ENCODE measurements at regions of chr1 and their contacts with region 1.

Region 1: DNA sequence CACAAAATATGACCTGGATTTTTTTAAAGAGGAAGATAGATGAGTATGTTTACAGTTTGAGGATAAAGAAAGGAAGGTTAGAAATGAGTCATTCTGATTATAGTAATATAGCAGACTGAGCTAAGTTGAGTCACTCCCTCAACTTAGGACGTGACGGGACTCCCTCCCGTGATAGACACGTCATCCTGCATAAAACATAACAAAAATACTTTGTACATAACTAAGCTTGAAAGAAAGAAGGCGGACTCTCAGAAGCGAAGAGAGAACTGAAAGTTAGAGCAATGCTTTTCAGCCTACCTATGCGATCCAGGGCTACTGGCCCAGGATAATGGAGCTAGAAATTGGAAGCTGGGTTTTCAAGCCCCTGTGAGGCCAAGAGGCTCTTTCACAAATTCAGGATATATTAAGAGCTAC is 53.0 kb upstream of the DESI2 start:
- DNase-seq: peak; percentile 74
- ATAC-seq: peak; percentile 96
- H3K4me3 Mint-ChIP-seq: peak overlapping the region; percentile 55
- H3K27ac Mint-ChIP-seq: peak overlapping the region; percentile 95
- H3K4me1 Mint-ChIP-seq: peaks cover 20% of the 10 kb centered on the region
- H3K27me3 Mint-ChIP-seq: peaks cover 4% of the 10 kb centered on the region

Region 2: DNA sequence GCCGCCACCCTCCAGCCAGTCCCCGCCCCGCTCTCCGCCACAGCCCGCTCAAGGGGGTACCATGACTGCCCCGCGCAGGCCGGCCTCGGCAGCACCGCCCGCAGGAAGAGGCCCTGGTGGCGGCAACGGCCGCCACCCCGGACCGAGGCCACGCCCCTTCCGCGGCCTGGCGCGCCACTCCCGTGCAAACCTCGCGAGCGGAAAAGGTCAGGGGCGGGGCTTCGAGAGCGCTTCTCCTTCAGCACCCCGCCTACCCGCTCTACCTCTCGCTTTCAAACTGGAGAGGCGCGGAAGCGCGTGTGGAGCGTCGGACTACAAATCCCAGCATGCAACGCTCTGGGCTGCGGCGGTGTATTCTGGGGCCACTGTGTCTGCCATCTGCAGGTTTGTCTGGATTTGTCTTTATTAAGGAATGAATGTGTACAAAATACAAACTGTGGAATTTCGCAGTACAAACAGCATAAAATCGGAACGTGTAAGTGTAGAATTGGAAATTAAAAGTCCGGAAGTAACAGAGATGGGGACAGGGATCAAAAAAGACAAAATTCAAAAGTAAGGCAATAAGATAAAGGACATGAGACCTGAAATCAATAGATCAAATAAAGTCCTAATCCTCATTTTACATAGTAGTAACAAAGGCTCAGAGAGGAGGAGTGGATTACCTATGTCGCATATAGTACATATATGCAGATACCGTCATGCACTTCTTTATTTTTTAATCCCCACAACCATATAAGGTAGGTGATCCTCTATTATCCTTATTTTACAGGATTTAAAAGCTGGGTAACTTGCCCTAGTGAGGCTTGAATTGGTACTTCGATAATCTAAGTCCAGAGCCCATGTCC is 147.8 kb before region 1 on chr1:
- CTCF ChIA-PET with region 1: interaction called, 3 read pairs
- POLR2A ChIA-PET with region 1: interaction called, 4 read pairs
- intact Hi-C with region 1: loop called (anchors 2 to 5 kb)
- DNase-seq: peak; percentile 99
- ATAC-seq: peak; percentile 91
- H3K4me3 Mint-ChIP-seq: peak overlapping the region; percentile 97
- H3K27ac Mint-ChIP-seq: peak overlapping the region; percentile 97
- H3K4me1 Mint-ChIP-seq: peaks cover 40% of the 10 kb centered on the region
- H3K27me3 Mint-ChIP-seq: no peaks in the 10 kb centered on the region

Region 3: GRCh38 chr1:244652699-244653466 is 52.9 kb after region 1 on chr1 and contains the start of gene DESI2:
- CTCF ChIA-PET with region 1: interaction called, 8 read pairs
- POLR2A ChIA-PET with region 1: no interaction called
- intact Hi-C with region 1: loop called (anchors 1 kb)
- DNase-seq: peak; percentile 98
- ATAC-seq: peak; percentile 96
- H3K4me3 Mint-ChIP-seq: peak within 1 kb of the TSS; percentile 76
- H3K27ac Mint-ChIP-seq: peak within 1 kb of the TSS; percentile 95
- H3K4me1 Mint-ChIP-seq: peaks cover 19% of the 10 kb centered on the region
- H3K27me3 Mint-ChIP-seq: no peaks in the 10 kb centered on the region
- total RNA-seq, gene DESI2: 24.5 to 26.0 TPM

Region 4: DNA sequence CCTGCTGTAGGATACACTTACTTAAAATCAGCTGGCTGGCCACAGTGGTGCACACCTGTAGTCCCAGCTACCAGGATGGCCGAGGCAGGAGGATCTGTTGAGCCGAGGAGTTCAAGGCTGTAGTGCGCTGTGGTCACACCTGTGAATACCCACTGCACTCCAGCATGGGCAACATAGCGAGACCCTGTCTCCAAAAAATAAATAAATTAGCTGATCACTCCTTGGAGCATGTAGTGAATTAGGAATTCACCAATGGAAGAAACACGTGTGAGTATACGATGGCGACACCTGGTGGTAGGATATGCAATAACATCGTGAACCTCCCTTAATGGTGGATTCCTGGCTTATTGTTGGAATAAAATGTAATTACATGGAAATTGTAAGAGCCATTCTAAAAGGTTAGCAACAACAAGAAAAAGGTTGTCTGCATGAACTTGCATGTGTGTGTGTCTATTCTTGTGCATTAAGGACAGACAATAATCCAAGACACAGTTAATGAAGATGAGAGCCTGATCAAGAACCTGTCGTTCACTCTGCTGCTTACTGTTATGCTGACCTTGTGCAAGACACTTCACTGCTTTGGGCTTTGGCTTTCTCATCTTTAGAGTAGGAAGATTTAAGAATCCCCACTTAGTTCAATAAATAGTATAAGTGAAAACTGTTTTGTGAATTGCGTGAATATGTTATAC is 196.9 kb after region 1 on chr1:
- CTCF ChIA-PET with region 1: interaction called, 66 read pairs
- POLR2A ChIA-PET with region 1: interaction called, 3 read pairs
- intact Hi-C with region 1: loop called (anchors 1 kb)
- DNase-seq: peak; percentile 70
- ATAC-seq: peak; percentile 40
- H3K4me3 Mint-ChIP-seq: no peak overlapping the region
- H3K27ac Mint-ChIP-seq: no peak overlapping the region
- H3K4me1 Mint-ChIP-seq: peaks cover 2% of the 10 kb centered on the region
- H3K27me3 Mint-ChIP-seq: no peaks in the 10 kb centered on the region

Region 5: DNA sequence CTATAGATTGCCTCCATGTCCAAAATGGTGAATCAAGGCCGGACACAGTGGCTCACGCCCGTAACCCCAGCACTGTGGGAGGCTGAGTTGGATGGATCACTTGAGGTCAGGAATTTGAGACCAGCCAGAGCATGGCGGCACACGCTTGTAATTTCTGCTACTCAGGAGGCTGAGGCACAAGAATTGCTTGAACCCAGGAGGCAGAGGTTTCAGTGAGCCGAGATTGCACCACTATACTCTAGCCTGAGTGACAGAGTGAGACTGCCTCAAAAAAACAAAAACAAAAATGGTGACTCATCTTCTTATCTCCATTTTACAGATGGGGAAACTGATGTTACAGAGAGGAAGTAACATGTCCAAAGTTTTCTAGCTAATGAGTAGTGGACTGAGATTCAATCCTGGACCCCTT is 363.4 kb after region 1 on chr1:
- CTCF ChIA-PET with region 1: no interaction called
- POLR2A ChIA-PET with region 1: no interaction called
- intact Hi-C with region 1: no loop called
- DNase-seq: no peak
- ATAC-seq: peak; percentile 53
- H3K4me3 Mint-ChIP-seq: no peak overlapping the region
- H3K27ac Mint-ChIP-seq: peak overlapping the region; percentile 42
- H3K4me1 Mint-ChIP-seq: peaks cover 14% of the 10 kb centered on the region
- H3K27me3 Mint-ChIP-seq: no peaks in the 10 kb centered on the region

Region 6: DNA sequence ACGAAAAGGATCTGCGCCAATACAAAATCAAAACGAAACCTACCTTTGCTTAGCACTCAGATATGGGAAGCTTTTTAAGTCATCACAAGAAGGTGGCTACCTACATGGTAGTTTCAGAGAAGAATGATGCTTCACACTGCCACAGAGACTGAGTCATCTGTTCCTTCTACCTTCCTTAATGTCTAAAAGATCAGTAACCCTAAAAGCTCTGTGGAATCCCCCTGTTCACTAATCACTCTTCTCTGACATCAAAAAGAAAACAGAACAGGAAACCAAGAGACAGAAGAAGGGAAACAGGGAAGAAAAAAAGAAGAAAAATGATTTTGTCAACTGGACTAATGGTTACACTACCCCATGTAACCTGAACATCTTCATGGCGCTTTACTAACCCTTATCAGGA is 1730.0 kb after region 1 on chr1:
- CTCF ChIA-PET with region 1: no interaction called
- POLR2A ChIA-PET with region 1: no interaction called
- intact Hi-C with region 1: loop called in 1 of 2 experiments (anchors 10 kb)
- DNase-seq: peak; percentile 60
- ATAC-seq: peak; percentile 92
- H3K4me3 Mint-ChIP-seq: peak overlapping the region; percentile 3
- H3K27ac Mint-ChIP-seq: peak overlapping the region; percentile 63
- H3K4me1 Mint-ChIP-seq: peaks cover 51% of the 10 kb centered on the region
- H3K27me3 Mint-ChIP-seq: no peaks in the 10 kb centered on the region

Measured in activated CD4-positive, alpha-beta T cell treated with anti-CD3 and anti-CD28 coated beads for 36 hours (primary cell).